AG04449 (cell line): ENCODE measurements at regions of chr16 and their contacts with region 1.

Region 1: DNA sequence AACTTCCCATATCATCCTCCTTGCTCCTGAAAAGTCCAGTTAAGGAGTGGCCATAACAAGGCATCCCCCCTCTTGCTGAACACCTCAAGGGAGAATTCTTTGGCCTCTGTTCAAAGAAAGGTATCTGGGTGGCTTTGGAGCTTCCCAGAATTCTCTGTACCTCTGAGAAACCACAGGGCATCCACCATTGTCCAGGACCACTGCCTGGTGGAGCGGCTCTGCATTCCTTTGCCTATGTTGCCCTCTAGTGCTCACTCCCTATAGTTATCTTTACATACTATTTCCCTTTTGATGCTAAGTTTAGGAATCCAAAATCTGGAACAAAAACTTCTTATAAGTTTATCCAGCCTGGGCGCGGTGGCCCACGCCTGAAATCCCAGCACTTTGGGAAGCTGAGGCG is 30.3 kb downstream of the CHD9NB start:
- DNase-seq: no peak
- H3K4me3 ChIP-seq: no peak overlapping the region
- CTCF ChIP-seq: peak; percentile 62

Region 2: GRCh38 chr16:53007095-53007494 is 15.3 kb before region 1 on chr16:
- CTCF ChIA-PET with region 1: interaction called, 12 read pairs
- POLR2A ChIA-PET with region 1: no interaction called
- DNase-seq: no peak
- H3K4me3 ChIP-seq: no peak overlapping the region
- CTCF ChIP-seq: no peak

Region 3: DNA sequence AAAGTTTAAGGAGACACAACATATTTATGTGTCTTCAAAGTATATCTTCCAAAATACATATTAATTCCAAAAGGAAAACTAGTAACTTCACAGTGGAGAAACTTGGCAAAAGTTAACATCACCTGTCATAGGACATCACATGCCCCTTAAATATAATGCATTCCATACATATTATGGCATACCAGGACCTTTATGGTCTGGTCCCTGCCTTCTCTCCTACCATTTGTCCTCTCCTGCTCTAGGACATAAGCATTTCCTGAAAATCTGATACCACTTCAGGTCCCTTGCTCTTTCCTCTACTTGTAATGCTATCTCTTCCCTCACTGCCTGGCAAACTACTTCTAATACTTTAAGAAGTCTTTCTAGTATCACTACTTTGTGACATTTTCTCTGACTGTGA is 243.8 kb after region 1 on chr16:
- CTCF ChIA-PET with region 1: no interaction called
- POLR2A ChIA-PET with region 1: no interaction called
- DNase-seq: no peak
- H3K4me3 ChIP-seq: no peak overlapping the region
- CTCF ChIP-seq: no peak